Right ventricle myocardium inferior (tissue), 1 donor: ENCODE measurements at regions of chr1 and their contacts with region 1.

Region 1: DNA sequence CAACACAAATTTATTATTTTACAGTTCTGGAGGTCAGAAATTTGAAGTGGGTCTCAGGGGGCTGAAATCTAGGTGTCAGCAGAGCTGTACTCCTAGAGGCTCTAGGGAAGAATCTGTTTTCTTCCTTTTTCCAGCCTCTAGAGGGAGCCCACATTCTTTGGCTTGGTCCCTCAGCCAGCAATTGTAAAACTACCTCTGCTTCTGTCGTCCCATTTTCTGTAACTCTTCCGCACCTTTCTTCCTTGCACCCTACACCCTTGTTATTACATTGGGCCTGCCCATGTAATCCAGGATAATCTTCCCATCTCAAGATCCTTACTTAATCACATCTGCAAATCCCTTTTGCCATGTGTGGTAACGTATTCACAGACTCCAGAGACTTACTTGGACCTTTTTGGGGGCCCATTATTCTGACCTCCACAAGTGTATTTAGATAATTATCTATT is 24.8 kb upstream of the THEM4 start:
- DNase-seq: no peak
- ATAC-seq: peak; percentile 88

Region 2: GRCh38 chr1:151976858-151977257 is 42.8 kb after region 1 on chr1:
- intact Hi-C with region 1: no loop called
- DNase-seq: no peak
- ATAC-seq: no peak

Region 3: GRCh38 chr1:151995774-151996173 is 61.7 kb after region 1 on chr1:
- intact Hi-C with region 1: loop called (anchors 1 kb)
- DNase-seq: no peak
- ATAC-seq: no peak

Region 4: GRCh38 chr1:152001391-152002249 is 67.5 kb after region 1 on chr1:
- intact Hi-C with region 1: loop called (anchors 1 kb)
- DNase-seq: peak; percentile 87
- ATAC-seq: peak; percentile 49